Activated CD4-positive, alpha-beta memory T cell treated with anti-CD3 and anti-CD28 coated beads for 36 hours (primary cell): ENCODE measurements at regions of chr11 and their contacts with region 1.

Region 1: GRCh38 chr11:6705905-6706535 is 22.9 kb upstream of the MRPL17 start:
- DNase-seq: peak; percentile 53
- H3K4me3 Mint-ChIP-seq: no peak overlapping the region
- H3K27ac Mint-ChIP-seq: peak overlapping the region; percentile 57
- H3K4me1 Mint-ChIP-seq: peaks cover 18% of the 10 kb centered on the region
- H3K27me3 Mint-ChIP-seq: no peaks in the 10 kb centered on the region

Region 2: DNA sequence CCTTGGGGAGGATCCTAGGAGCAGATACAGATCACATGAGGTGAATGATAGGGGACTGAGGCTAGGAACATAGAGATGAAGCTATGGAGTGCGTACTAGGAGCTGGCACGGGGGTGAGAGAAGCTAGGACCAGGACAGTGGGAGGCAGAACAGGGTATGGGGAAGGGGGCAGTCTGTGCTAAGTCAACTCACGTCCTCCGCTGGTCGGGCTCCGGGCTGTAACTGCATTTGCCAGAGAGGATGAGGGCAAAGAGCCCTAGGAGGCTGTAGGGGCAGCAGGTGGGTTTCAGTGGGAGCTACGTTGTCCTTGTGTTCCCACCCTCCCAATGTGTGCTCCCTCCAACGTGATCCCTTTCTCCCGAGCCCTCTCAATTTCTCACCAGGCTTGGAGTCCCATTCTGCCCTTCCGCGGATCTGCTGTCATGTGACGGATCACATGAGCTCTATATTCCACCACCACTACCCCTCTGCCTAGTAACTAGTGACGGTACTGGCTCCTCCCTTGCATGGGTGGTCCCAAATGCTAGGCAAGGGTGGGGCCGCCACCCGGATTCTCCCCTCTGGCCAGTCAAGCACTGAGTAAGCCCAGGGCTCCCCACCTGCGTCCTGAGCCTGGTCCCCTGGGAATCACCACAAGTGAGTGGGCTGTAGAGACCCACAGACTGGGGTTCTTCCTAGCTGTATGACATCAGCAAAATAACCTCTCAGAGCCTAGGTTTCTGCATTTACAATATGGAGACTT is 86.8 kb before region 1 on chr11 and contains the start of gene TPP1:
- CTCF ChIA-PET with region 1: interaction called, 13 read pairs
- POLR2A ChIA-PET with region 1: no interaction called
- intact Hi-C with region 1: no loop called
- DNase-seq: peak; percentile 93
- H3K4me3 Mint-ChIP-seq: no peak within 1 kb of the TSS
- H3K27ac Mint-ChIP-seq: no peak within 1 kb of the TSS
- H3K4me1 Mint-ChIP-seq: peaks cover 10% of the 10 kb centered on the region
- H3K27me3 Mint-ChIP-seq: no peaks in the 10 kb centered on the region
- total RNA-seq, gene TPP1: 53.2 to 56.6 TPM

Region 3: DNA sequence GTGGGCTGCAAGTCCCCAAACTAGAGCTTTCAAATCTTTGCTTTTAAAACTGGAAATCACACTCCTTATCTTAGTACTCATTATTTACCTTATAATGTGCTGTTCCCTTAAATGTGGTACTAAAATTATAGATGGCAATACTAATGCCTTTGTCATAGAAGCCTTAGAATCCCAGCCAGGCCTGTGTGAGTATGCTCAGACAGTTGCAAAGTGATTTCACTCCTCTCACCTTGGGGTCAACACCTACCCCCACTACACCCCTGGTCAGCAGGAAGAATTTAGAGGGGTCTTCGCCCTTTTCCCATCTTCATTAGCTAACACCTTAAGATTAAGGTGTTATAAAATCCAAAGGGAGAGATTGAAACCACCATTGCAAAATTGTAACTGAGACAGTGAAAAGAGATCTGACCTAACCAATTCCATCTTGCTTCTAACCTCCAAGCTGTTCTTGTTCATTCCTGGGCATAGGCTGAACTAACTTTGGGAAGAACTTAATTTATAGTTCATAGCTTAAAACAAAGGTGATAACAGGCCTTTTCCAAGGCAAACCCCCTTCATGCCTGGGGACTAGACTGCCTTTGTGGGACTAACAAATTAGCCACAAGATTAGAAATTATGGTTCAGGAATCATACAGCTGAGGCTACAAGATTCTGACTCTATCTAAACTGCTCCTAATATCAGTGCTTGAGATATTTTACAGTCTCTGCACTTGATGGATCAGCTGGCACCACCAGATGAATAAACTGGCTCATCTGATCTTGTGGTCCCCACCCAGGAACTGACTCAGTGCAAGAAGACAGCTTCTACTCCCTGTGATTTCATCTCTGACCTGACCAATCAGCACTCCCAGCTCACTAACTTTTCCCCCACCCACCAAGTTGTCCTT is 12.4 kb before region 1 on chr11:
- CTCF ChIA-PET with region 1: interaction called, 23 read pairs
- POLR2A ChIA-PET with region 1: no interaction called
- intact Hi-C with region 1: loop called (anchors 1 kb)
- DNase-seq: peak; percentile 83
- H3K4me3 Mint-ChIP-seq: peak overlapping the region; percentile 4
- H3K27ac Mint-ChIP-seq: peak overlapping the region; percentile 72
- H3K4me1 Mint-ChIP-seq: peaks cover 42% of the 10 kb centered on the region
- H3K27me3 Mint-ChIP-seq: no peaks in the 10 kb centered on the region

Region 4: DNA sequence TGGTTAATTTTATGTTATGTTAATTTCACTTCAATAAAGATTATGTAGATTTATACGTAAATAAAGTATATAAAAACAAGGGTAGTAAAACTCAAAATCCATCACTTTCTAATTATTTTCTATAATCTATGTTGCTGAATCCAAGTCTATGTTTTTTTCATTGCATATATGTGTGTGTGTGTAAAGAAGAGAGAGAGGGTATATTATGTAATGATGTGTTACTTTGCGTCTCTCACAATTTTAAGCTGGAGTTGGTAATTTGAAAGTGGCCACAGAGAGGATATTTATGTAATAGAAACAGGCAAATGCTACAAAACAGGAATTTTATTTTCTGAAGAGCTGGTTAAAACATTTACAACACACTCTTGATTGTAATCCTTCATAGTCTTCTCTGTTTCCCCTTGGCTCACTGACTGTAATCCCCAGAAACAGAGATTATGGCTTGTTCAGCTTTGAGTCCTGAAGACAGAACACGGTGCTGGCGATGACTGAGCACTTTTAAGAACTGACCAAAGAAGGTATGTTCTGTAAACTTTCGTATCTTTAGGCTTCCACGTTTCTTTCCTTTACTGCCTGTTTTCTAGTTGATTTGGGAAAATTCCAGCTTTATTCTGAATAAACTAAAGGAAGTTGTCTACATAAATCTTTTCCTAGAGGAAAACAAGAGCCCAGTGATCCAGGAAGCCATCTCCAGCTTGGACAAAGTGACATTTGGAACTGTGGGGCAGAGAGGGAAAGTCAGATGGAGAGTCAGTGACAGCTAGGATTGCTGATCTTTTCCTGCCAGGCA is 22.1 kb after region 1 on chr11:
- CTCF ChIA-PET with region 1: interaction called, 14 read pairs
- POLR2A ChIA-PET with region 1: no interaction called
- intact Hi-C with region 1: no loop called
- DNase-seq: no peak
- H3K4me3 Mint-ChIP-seq: no peak overlapping the region
- H3K27ac Mint-ChIP-seq: peak overlapping the region; percentile 52
- H3K4me1 Mint-ChIP-seq: peaks cover 77% of the 10 kb centered on the region
- H3K27me3 Mint-ChIP-seq: no peaks in the 10 kb centered on the region

Region 5: GRCh38 chr11:6757373-6757967 is 51.5 kb after region 1 on chr11:
- CTCF ChIA-PET with region 1: interaction called, 68 read pairs
- POLR2A ChIA-PET with region 1: no interaction called
- intact Hi-C with region 1: loop called (anchors 1 kb)
- DNase-seq: peak; percentile 74
- H3K4me3 Mint-ChIP-seq: no peak overlapping the region
- H3K27ac Mint-ChIP-seq: no peak overlapping the region
- H3K4me1 Mint-ChIP-seq: peaks cover 6% of the 10 kb centered on the region
- H3K27me3 Mint-ChIP-seq: peaks cover 1% of the 10 kb centered on the region

Region 6: GRCh38 chr11:6855971-6856541 is 150.0 kb after region 1 on chr11:
- CTCF ChIA-PET with region 1: no interaction called
- POLR2A ChIA-PET with region 1: no interaction called
- intact Hi-C with region 1: no loop called
- DNase-seq: no peak
- H3K4me3 Mint-ChIP-seq: no peak overlapping the region
- H3K27ac Mint-ChIP-seq: no peak overlapping the region
- H3K4me1 Mint-ChIP-seq: peaks cover 8% of the 10 kb centered on the region
- H3K27me3 Mint-ChIP-seq: peaks cover 14% of the 10 kb centered on the region